Activated CD4-positive, alpha-beta T cell treated with anti-CD3 and anti-CD28 coated beads for 36 hours (primary cell): ENCODE measurements at regions of chr14 and their contacts with region 1.

Region 1: GRCh38 chr14:102774391-102775153 is 2.7 kb upstream of the TRAF3 start:
- DNase-seq: peak; percentile 73
- ATAC-seq: peak; percentile 58
- H3K4me3 Mint-ChIP-seq: peak overlapping the region; percentile 7
- H3K27ac Mint-ChIP-seq: peak overlapping the region; percentile 78
- H3K4me1 Mint-ChIP-seq: peaks cover 32% of the 10 kb centered on the region
- H3K27me3 Mint-ChIP-seq: no peaks in the 10 kb centered on the region

Region 2: GRCh38 chr14:102786768-102787167 is 12.2 kb after region 1 on chr14:
- CTCF ChIA-PET with region 1: interaction called, 6 read pairs
- POLR2A ChIA-PET with region 1: interaction called, 12 read pairs
- intact Hi-C with region 1: no loop called
- DNase-seq: peak; percentile 64
- ATAC-seq: peak; percentile 78
- H3K4me3 Mint-ChIP-seq: peak overlapping the region; percentile 13
- H3K27ac Mint-ChIP-seq: peak overlapping the region; percentile 81
- H3K4me1 Mint-ChIP-seq: peaks cover 91% of the 10 kb centered on the region
- H3K27me3 Mint-ChIP-seq: no peaks in the 10 kb centered on the region

Region 3: DNA sequence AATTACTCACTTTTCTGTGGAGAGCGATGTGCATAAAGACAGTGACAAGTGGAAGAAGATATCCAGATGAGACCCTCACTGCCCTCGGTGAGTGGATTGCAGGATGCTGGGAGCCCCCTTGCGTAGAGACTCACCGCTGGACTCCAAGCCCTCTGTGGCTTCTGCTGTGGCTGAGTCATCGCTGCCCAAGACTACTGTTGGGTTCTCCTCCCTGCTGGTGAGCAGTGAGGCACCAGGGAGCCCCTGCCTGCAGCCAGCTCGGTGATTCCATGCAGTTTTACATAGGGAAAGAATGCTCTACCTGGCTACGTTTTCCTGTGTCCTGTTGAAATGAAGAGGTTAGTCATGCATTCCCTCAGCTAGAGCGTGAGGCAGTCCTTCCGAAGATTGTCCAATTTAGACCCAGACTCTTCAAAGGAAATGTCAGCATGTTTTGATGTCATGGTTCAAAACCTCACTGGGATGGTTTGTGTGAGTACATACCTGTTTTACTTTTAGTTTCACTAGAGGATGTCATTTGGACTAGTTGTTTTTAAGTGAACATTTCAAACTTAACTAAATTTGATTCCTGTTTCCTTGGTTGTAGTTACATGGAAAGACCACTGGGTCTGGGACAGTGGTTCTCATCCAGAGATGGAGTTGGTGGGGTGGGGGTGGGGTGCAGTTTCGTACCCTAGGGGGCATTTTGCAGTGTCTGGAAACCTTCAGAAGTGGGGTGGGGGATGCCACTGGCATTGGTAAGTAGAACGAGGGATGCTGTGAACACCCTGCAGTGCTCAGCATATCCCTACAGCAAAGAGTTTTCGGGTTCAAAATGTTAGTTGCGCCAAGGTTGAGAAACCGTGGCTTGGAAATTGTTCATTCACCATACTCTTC is 31.0 kb after region 1 on chr14:
- CTCF ChIA-PET with region 1: interaction called, 6 read pairs
- POLR2A ChIA-PET with region 1: no interaction called
- intact Hi-C with region 1: loop called in 1 of 2 experiments (anchors 1 kb)
- DNase-seq: peak; percentile 76
- ATAC-seq: peak; percentile 57
- H3K4me3 Mint-ChIP-seq: peak overlapping the region; percentile 65
- H3K27ac Mint-ChIP-seq: peak overlapping the region; percentile 96
- H3K4me1 Mint-ChIP-seq: peaks cover 78% of the 10 kb centered on the region
- H3K27me3 Mint-ChIP-seq: no peaks in the 10 kb centered on the region

Region 4: GRCh38 chr14:102819176-102819628 is 44.6 kb after region 1 on chr14:
- CTCF ChIA-PET with region 1: interaction called, 4 read pairs
- POLR2A ChIA-PET with region 1: interaction called, 5 read pairs
- intact Hi-C with region 1: loop called (anchors 1 kb)
- DNase-seq: peak; percentile 91
- ATAC-seq: peak; percentile 74
- H3K4me3 Mint-ChIP-seq: peak overlapping the region; percentile 61
- H3K27ac Mint-ChIP-seq: peak overlapping the region; percentile 94
- H3K4me1 Mint-ChIP-seq: peaks cover 87% of the 10 kb centered on the region
- H3K27me3 Mint-ChIP-seq: no peaks in the 10 kb centered on the region

Region 5: DNA sequence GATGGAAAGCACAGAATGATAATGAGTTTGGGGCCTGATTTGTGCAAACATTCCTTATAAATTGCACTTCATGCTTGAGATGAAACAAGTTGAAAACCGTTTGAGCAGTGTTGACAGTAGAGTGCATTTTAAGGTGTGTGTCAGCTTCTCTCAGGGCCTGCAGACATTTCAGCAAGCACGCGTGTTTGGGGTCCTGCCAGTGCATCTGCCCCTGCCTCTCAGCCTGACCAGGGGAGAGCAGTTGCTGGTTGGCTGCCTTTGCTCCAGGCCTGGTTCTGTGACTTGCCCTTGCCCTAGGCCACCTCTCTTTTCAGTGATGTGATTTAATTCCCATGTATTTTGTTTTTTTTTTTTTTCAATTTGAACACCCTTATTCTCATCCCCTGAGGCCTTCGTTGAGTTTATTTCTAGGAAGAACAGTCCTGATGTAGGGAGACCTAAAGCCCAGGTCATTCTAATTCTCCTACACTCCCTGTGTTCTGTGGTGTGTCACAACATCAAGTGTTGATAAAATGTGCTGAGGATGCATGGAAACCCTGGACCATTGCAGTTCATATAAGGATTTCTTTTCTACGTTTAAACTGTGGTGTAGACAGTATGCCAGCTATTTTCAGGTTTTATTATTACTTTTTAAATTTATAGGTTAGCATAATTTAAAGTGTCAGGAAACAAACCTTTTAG is 107.8 kb after region 1 on chr14:
- CTCF ChIA-PET with region 1: no interaction called
- POLR2A ChIA-PET with region 1: no interaction called
- intact Hi-C with region 1: loop called (anchors 2 kb)
- DNase-seq: no peak
- ATAC-seq: no peak
- H3K4me3 Mint-ChIP-seq: no peak overlapping the region
- H3K27ac Mint-ChIP-seq: peak overlapping the region; percentile 66
- H3K4me1 Mint-ChIP-seq: peaks cover 28% of the 10 kb centered on the region
- H3K27me3 Mint-ChIP-seq: no peaks in the 10 kb centered on the region

Region 6: GRCh38 chr14:102917469-102918211 is 143.1 kb after region 1 on chr14:
- CTCF ChIA-PET with region 1: no interaction called
- POLR2A ChIA-PET with region 1: no interaction called
- intact Hi-C with region 1: loop called (anchors 1 to 5 kb)
- DNase-seq: peak; percentile 82
- ATAC-seq: peak; percentile 52
- H3K4me3 Mint-ChIP-seq: no peak overlapping the region
- H3K27ac Mint-ChIP-seq: peak overlapping the region; percentile 48
- H3K4me1 Mint-ChIP-seq: no peaks in the 10 kb centered on the region
- H3K27me3 Mint-ChIP-seq: no peaks in the 10 kb centered on the region

Region 7: DNA sequence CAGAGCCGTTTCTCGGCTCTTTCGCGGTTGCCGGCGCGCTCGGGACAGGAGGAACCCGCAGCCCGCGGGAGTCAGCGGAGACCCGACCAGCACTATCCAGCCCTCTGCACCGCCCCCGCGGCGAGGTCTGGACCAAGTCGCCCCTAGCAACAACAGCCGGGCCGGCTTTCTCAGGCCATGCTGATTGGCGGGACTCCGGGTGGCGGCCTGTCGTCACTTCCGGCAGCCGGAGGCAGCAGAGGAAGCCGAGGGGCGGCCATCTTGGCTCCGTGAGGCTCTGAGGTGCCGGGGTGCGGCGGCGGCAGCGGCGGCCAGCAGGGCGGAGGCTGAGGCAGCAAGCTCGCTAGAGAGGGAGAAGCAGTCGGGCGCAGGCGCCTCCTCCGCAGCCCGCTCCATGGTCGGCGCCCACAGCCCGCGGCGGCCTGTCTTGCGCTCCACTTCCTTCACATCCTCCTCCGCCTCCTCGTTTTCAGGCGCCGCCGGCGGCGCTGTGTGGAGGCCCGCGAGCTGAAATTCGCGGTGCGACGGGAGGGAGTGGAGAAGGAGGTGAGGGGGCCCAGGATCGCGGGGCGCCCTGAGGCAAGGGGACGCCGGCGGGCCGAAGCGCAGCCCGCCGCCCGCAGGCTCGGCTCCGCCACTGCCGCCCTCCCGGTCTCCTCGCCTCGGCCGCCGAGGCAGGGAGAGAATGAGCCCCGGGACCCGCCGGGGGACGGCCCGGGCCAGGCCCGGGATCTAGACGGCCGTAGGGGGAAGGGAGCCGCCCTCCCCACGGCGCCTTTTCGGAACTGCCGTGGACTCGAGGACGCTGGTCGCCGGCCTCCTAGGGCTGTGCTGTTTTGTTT is 610.8 kb after region 1 on chr14 and contains the start of gene MARK3:
- CTCF ChIA-PET with region 1: no interaction called
- POLR2A ChIA-PET with region 1: no interaction called
- intact Hi-C with region 1: loop called in 1 of 2 experiments (anchors 5 kb)
- DNase-seq: peak; percentile 98
- ATAC-seq: peak; percentile 93
- H3K4me3 Mint-ChIP-seq: peak within 1 kb of the TSS; percentile 99
- H3K27ac Mint-ChIP-seq: peak within 1 kb of the TSS; percentile 98
- H3K4me1 Mint-ChIP-seq: peaks cover 33% of the 10 kb centered on the region
- H3K27me3 Mint-ChIP-seq: no peaks in the 10 kb centered on the region
- total RNA-seq, gene MARK3: 57.3 to 64.9 TPM